ENCODE measurements at regions of chr9 and their contacts with region 1.

Region 1: DNA sequence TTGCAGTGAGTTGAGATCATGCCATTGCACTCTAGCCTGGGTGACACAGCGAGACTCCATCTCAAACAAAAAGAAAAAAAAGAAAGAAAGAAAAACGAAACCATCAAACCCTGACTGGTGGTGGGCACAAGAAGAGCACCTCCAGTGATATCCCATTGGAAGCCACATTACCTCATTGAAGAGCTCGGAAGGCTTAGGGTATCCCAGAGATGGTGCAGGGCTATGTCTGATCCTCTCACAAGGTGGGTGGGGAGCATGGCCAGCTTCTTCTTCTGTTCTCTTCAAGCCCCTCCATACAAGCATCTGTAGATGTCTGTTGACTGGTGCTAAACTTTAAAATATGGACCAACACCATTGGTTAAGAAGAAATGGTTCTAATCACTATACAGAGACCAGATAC is 45.8 kb downstream of the GAS1 start:
- DNase-seq: no peak
- H3K4me3 ChIP-seq: no peak overlapping the region
- H3K27ac ChIP-seq: no peak overlapping the region
- H3K4me1 ChIP-seq: no peaks in the 10 kb centered on the region
- H3K27me3 ChIP-seq: no peaks in the 10 kb centered on the region
- CTCF ChIP-seq: no peak

Region 2: GRCh38 chr9:86624630-86625029 is 276.9 kb before region 1 on chr9:
- CTCF ChIA-PET with region 1: no interaction called
- POLR2A ChIA-PET with region 1: interaction called, 12 read pairs
- intact Hi-C with region 1: no loop called
- DNase-seq: no peak
- H3K4me3 ChIP-seq: no peak overlapping the region
- H3K27ac ChIP-seq: no peak overlapping the region
- H3K4me1 ChIP-seq: no peaks in the 10 kb centered on the region
- H3K27me3 ChIP-seq: no peaks in the 10 kb centered on the region
- CTCF ChIP-seq: no peak

Measured in PC-9 (cell line).